ENCODE measurements at regions of chr15 and their contacts with region 1.

Region 1: GRCh38 chr15:97909291-97909891 is 51.1 kb upstream of the ARRDC4 start:
- DNase-seq: peak; percentile 29
- H3K4me3 Mint-ChIP-seq: no peak overlapping the region
- H3K27ac Mint-ChIP-seq: no peak overlapping the region
- H3K4me1 Mint-ChIP-seq: peaks cover 1% of the 10 kb centered on the region
- H3K27me3 Mint-ChIP-seq: peaks cover 12% of the 10 kb centered on the region

Region 2: GRCh38 chr15:98085003-98085639 is 175.7 kb after region 1 on chr15:
- intact Hi-C with region 1: loop called (anchors 1 kb)
- DNase-seq: no peak
- H3K4me3 Mint-ChIP-seq: no peak overlapping the region
- H3K27ac Mint-ChIP-seq: no peak overlapping the region
- H3K4me1 Mint-ChIP-seq: no peaks in the 10 kb centered on the region
- H3K27me3 Mint-ChIP-seq: no peaks in the 10 kb centered on the region

Region 3: DNA sequence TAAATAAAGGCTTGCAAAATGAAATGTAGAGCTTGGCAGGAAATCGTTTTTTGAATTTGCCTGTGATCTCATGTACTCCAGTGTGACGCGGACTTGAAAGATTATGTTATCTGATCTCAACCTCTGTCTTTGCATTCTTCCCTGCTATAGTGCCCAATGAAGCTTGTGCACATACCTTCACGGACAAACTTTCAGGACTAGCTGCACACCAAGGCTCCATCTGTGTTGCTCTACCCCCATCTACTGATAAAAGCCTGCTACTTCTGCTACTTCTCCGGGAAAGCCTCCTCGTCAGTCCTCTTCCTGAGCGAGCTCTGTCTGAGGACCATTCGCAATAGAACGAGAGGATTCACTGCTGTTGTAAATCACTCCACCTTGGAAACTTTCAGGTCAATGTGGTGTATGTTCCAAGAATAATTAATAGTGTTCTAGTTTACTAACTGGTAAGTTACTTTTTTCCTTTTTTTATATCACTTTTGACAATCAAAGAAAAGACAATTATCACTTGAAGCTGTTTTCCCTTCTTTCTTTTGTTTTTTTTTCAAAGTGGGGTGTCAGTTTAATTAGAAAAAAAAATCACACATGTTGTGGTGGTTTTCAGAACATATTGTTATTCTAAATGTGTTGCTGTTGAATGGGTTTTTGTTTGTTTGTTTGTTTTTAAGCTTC is 268.7 kb after region 1 on chr15:
- intact Hi-C with region 1: loop called (anchors 1 kb)
- DNase-seq: peak; percentile 28
- H3K4me3 Mint-ChIP-seq: no peak overlapping the region
- H3K27ac Mint-ChIP-seq: no peak overlapping the region
- H3K4me1 Mint-ChIP-seq: peaks cover 8% of the 10 kb centered on the region
- H3K27me3 Mint-ChIP-seq: peaks cover 48% of the 10 kb centered on the region

Region 4: GRCh38 chr15:98292442-98293240 is 383.2 kb after region 1 on chr15:
- intact Hi-C with region 1: loop called (anchors 10 kb)
- DNase-seq: peak; percentile 17
- H3K4me3 Mint-ChIP-seq: no peak overlapping the region
- H3K27ac Mint-ChIP-seq: no peak overlapping the region
- H3K4me1 Mint-ChIP-seq: no peaks in the 10 kb centered on the region
- H3K27me3 Mint-ChIP-seq: peaks cover 25% of the 10 kb centered on the region

Measured in activated T-helper 2 cell treated with anti-CD3 and anti-CD28 coated beads, Interferon-gamma antibody, Interleukin-2, Interleukin-4, amounts not matched to agents 10 μg/mL and 5 μg/mL and 100 μg/mL, durations not matched to agents 14 hours and 24 hours and 36 hours (primary cell).